H1 (cell line): ENCODE measurements at regions of chr6 and their contacts with region 1.

Region 1: GRCh38 chr6:135270676-135271536 is 89.8 kb downstream of the MYB start:
- DNase-seq: peak; percentile 73 to 90
- H3K4me3 ChIP-seq: peak overlapping the region in 3 of 4 experiments; percentile 23 to 37 (median 30); a peak in 4 of 8 replicates
- H3K27ac ChIP-seq: peak overlapping the region; percentile 60
- H3K4me1 ChIP-seq: peaks cover 5 to 26% (median 20%) of the 10 kb centered on the region in 4 experiments; a peak in 5 of 7 replicates
- H3K27me3 ChIP-seq: peaks cover 0 to 2% (median 0%) of the 10 kb centered on the region in 4 experiments; a peak in 1 of 7 replicates
- CTCF ChIP-seq: no peak
- EP300 ChIP-seq: peak in 1 of 2 experiments; percentile 95; a peak in 2 of 3 replicates
- POLR2A ChIP-seq: peak; percentile 75 to 79; a peak in 2 of 3 replicates
- RAD21 ChIP-seq: peak; percentile 0 to 23; a peak in 3 of 4 replicates

Region 2: GRCh38 chr6:135183532-135184440 is 87.1 kb before region 1 on chr6:
- CTCF ChIA-PET with region 1: interaction called, 5 read pairs
- POLR2A ChIA-PET with region 1: interaction called, 10 read pairs
- DNase-seq: peak in 1 of 2 experiments; percentile 79
- H3K4me3 ChIP-seq: peak overlapping the region; percentile 62 to 86 (median 76)
- H3K27ac ChIP-seq: no peak overlapping the region
- H3K4me1 ChIP-seq: peaks cover 0 to 7% (median 2%) of the 10 kb centered on the region in 4 experiments; a peak in 2 of 7 replicates
- H3K27me3 ChIP-seq: peaks cover 0 to 26% (median 18%) of the 10 kb centered on the region in 4 experiments; a peak in 6 of 7 replicates
- CTCF ChIP-seq: peak; percentile 72 to 86 (median 85)
- EP300 ChIP-seq: no peak
- POLR2A ChIP-seq: no peak
- RAD21 ChIP-seq: peak; percentile 70 to 81

Region 3: DNA sequence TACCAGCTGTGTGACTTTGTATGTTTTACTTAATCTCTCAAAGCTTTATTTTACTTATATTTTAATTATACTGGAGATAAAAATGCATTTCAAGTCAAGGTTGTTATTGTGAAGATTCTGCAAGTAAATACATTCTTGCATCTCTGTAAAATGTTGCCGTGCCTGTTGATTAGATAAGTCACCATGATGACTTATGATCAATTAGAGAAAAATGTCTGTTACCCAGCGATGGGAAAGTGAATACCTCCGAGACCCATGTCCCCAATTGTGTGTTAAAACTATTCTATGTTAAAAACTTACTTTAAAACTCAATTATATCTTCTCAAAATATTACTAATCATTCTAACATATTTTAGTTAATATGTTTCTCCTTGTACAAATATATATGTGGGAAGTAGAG is 49.9 kb before region 1 on chr6:
- CTCF ChIA-PET with region 1: no interaction called
- POLR2A ChIA-PET with region 1: no interaction called
- DNase-seq: no peak
- H3K4me3 ChIP-seq: no peak overlapping the region
- H3K27ac ChIP-seq: no peak overlapping the region
- H3K4me1 ChIP-seq: peaks cover 0 to 5% (median 0%) of the 10 kb centered on the region in 4 experiments; a peak in 1 of 7 replicates
- H3K27me3 ChIP-seq: no peaks in the 10 kb centered on the region
- CTCF ChIP-seq: no peak
- EP300 ChIP-seq: no peak
- POLR2A ChIP-seq: no peak
- RAD21 ChIP-seq: no peak

Region 4: DNA sequence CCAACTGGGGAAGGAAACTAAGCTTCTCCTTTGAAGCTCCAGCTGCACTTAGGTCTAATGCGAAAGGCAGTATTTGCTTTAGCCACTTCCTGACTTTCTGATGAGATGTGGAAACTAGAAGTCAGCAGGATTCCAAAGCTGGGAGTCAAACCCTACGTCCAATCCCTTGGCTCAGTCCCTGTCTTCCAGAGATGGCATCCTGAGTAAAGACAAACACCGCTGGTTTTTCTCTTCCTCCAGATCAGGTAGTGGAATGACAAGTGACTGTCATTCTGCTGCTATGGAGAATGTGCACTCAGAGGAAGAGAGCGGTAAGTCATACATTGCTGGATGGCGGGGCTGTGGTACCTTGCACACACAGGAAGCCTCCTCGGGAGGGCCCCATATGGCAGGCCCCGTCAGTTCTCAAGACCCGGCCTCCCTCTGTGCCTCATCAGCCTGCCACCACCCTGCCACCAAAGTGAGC is 18.9 kb before region 1 on chr6:
- CTCF ChIA-PET with region 1: interaction called, 20 read pairs
- POLR2A ChIA-PET with region 1: interaction called, 20 read pairs
- DNase-seq: no peak
- H3K4me3 ChIP-seq: peak overlapping the region in 1 of 4 experiments; percentile 35; a peak in 1 of 8 replicates
- H3K27ac ChIP-seq: no peak overlapping the region
- H3K4me1 ChIP-seq: peaks cover 4 to 30% (median 27%) of the 10 kb centered on the region in 4 experiments
- H3K27me3 ChIP-seq: no peaks in the 10 kb centered on the region
- CTCF ChIP-seq: no peak
- EP300 ChIP-seq: no peak
- POLR2A ChIP-seq: no peak
- RAD21 ChIP-seq: no peak

Region 5: DNA sequence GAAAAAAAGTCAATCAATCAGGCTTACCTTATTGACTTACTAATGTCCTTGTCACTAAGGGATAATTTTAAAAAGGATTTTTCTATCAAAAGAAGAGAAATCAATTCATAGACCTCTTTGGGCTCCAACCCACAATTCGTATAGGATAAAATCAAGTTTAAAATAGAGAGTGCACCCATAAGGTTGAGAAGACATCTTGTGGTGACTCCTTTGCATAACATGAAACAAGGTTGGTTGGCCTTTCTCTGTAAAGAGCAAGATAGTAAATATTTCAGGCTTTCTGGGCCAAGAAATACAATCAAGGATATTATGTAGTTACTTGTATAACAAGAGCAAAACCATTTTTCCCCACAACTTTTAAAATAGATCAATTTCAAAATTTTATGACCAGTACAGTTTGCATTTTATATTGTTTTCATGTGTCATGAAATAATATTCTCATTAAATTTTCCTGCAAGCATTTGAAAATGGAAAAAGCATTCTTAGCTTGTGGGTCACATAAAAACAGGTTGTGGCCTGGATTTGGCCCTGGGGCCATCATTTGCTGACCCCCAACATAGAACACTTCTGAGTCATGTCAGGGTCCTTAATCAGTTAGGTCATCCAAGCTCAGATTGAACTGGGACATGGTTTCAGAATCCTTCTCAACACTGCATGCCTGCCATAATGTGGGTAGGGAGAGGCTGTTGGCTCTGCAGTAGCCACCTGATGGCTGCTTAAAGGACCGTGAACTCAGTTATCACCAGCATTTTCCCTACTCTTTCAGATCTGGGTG is 13.1 kb before region 1 on chr6:
- CTCF ChIA-PET with region 1: interaction called, 20 read pairs
- POLR2A ChIA-PET with region 1: interaction called, 20 read pairs
- DNase-seq: no peak
- H3K4me3 ChIP-seq: no peak overlapping the region
- H3K27ac ChIP-seq: no peak overlapping the region
- H3K4me1 ChIP-seq: peaks cover 0 to 2% (median 0%) of the 10 kb centered on the region in 4 experiments; a peak in 2 of 7 replicates
- H3K27me3 ChIP-seq: no peaks in the 10 kb centered on the region
- CTCF ChIP-seq: no peak
- EP300 ChIP-seq: no peak
- POLR2A ChIP-seq: no peak
- RAD21 ChIP-seq: no peak; a peak in 2 of 4 replicates

Region 6: GRCh38 chr6:135782546-135782945 is 511.6 kb after region 1 on chr6:
- CTCF ChIA-PET with region 1: no interaction called
- POLR2A ChIA-PET with region 1: no interaction called
- DNase-seq: no peak
- H3K4me3 ChIP-seq: no peak overlapping the region
- H3K27ac ChIP-seq: no peak overlapping the region
- H3K4me1 ChIP-seq: no peaks in the 10 kb centered on the region
- H3K27me3 ChIP-seq: no peaks in the 10 kb centered on the region
- CTCF ChIP-seq: no peak
- EP300 ChIP-seq: no peak
- POLR2A ChIP-seq: no peak
- RAD21 ChIP-seq: no peak